ENCODE measurements at regions of chr14 and their contacts with region 1.

Region 1: DNA sequence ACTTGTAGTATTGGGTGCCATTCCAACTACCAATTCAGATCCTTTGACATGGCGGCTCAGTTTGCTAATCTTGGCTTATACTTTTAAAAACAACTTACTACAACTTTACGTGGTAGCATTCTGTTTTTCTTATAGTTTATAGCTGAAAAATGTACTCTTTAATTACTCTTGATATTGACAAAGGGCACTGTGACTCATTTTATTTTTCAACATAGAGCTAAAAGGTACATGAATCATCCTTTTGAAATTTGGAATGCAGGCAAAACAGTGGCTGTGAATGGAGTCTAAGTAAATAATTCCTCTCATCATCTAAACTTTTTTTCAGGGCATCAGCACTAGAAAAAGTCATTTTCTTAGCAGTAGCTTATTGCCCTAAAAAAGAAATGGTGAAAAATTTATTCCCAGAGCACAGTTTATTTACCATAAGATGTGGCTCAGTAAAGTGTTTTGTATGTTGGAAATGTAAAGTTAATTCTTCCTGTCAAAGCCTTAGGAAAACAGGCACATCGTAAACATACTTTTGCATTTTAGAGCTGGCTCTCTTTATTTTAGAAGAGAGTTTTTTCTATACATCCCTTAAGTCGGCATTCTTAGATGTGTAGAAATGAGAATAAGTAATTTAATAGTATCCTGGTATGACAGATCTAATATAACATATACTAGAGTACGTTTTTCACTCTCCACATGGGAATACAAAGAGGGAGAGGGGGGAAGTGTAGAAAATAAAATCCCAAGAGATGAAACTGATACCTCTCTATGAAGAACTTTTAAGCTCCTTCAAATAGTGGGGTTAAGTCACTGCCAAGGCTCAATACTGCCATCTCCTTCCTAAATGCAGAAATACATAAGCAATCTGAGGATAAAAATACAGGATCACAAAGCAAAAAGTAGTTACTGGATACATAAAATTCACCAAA is 55.2 kb downstream of the SLC25A21 start:
- DNase-seq: peak; percentile 58

Region 2: GRCh38 chr14:36647824-36648753 is 469.1 kb before region 1 on chr14:
- CTCF ChIA-PET with region 1: interaction called, 20 read pairs
- POLR2A ChIA-PET with region 1: no interaction called
- DNase-seq: no peak

Region 3: GRCh38 chr14:36925094-36925493 is 192.1 kb before region 1 on chr14:
- CTCF ChIA-PET with region 1: no interaction called
- POLR2A ChIA-PET with region 1: no interaction called
- DNase-seq: no peak

Region 4: GRCh38 chr14:36941783-36942521 is 175.2 kb before region 1 on chr14:
- CTCF ChIA-PET with region 1: interaction called, 13 read pairs
- POLR2A ChIA-PET with region 1: no interaction called
- DNase-seq: peak; percentile 54

Region 5: GRCh38 chr14:37081202-37081601 is 36.0 kb before region 1 on chr14:
- CTCF ChIA-PET with region 1: no interaction called
- POLR2A ChIA-PET with region 1: no interaction called
- DNase-seq: no peak

Region 6: GRCh38 chr14:37142835-37143401 is 25.7 kb after region 1 on chr14:
- CTCF ChIA-PET with region 1: interaction called, 12 read pairs
- POLR2A ChIA-PET with region 1: no interaction called
- DNase-seq: no peak

Measured in HEK293T (cell line).